Naive thymus-derived CD4-positive, alpha-beta T cell (primary cell): ENCODE measurements at regions of chr2 and their contacts with region 1.

Region 1: GRCh38 chr2:159807183-159808031 is 9.4 kb upstream of the CD302 start:
- DNase-seq: no peak
- ATAC-seq: peak; percentile 55
- H3K4me3 ChIP-seq: no peak overlapping the region
- H3K4me3 Mint-ChIP-seq: no peak overlapping the region
- H3K27ac ChIP-seq: no peak overlapping the region
- H3K27ac Mint-ChIP-seq: no peak overlapping the region
- H3K4me1 ChIP-seq: no peaks in the 10 kb centered on the region
- H3K4me1 Mint-ChIP-seq: peaks cover 0 to 4% (median 0%) of the 10 kb centered on the region in 7 donors
- H3K27me3 ChIP-seq: no peaks in the 10 kb centered on the region
- H3K27me3 Mint-ChIP-seq: no peaks in the 10 kb centered on the region

Region 2: GRCh38 chr2:159035790-159036411 is 771.5 kb before region 1 on chr2:
- CTCF ChIA-PET with region 1: no interaction called
- POLR2A ChIA-PET with region 1: no interaction called
- intact Hi-C with region 1: loop called in 1 of 2 experiments (anchors 10 kb)
- DNase-seq: peak in 7 of 9 donors; percentile 18 to 53 (median 35)
- ATAC-seq: peak; percentile 66
- H3K4me3 ChIP-seq: no peak overlapping the region
- H3K4me3 Mint-ChIP-seq: no peak overlapping the region
- H3K27ac ChIP-seq: no peak overlapping the region
- H3K27ac Mint-ChIP-seq: no peak overlapping the region
- H3K4me1 ChIP-seq: no peaks in the 10 kb centered on the region
- H3K4me1 Mint-ChIP-seq: no peaks in the 10 kb centered on the region
- H3K27me3 ChIP-seq: no peaks in the 10 kb centered on the region
- H3K27me3 Mint-ChIP-seq: peaks cover 0 to 8% (median 0%) of the 10 kb centered on the region in 5 donors